Activated naive CD4-positive, alpha-beta T cell treated with anti-CD3 and anti-CD28 coated beads for 36 hours (primary cell): ENCODE measurements at regions of chr1 and their contacts with region 1.

Region 1: DNA sequence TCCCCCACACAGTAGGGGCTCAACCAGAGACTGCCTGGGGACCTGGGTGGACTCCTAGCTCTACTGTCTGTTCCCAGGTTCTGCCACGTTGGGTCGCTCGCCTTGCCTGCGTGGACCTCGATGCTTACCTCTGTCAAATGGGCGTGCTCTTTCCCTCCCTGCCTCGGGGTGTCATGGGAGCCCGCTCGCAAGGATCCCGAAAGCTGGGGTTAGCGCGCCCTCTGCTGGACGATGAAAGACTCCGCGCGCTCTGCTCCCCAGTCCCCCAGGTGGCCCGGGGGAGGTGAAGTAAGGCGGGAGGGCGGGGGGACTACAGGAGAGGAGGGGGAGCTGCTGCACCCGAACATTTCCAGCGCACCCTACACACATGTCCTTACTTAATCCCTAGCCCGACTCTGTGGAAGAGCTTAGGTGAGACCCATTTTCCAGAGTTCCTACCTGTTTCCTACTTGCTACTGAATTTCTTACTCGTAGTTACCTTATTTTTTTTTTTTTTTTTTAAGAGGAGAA is 2.3 kb upstream of the BSND start:
- DNase-seq: peak; percentile 89
- H3K4me3 Mint-ChIP-seq: no peak overlapping the region
- H3K27ac Mint-ChIP-seq: no peak overlapping the region
- H3K4me1 Mint-ChIP-seq: peaks cover 18% of the 10 kb centered on the region
- H3K27me3 Mint-ChIP-seq: peaks cover 40% of the 10 kb centered on the region

Region 2: GRCh38 chr1:54671985-54672608 is 324.3 kb before region 1 on chr1:
- CTCF ChIA-PET with region 1: no interaction called
- intact Hi-C with region 1: loop called (anchors 1 kb)
- DNase-seq: peak; percentile 84
- H3K4me3 Mint-ChIP-seq: no peak overlapping the region
- H3K27ac Mint-ChIP-seq: no peak overlapping the region
- H3K4me1 Mint-ChIP-seq: no peaks in the 10 kb centered on the region
- H3K27me3 Mint-ChIP-seq: no peaks in the 10 kb centered on the region

Region 3: GRCh38 chr1:54950369-54951163 is 45.8 kb before region 1 on chr1:
- CTCF ChIA-PET with region 1: interaction called, 72 read pairs
- intact Hi-C with region 1: loop called (anchors 1 kb)
- DNase-seq: peak; percentile 81
- H3K4me3 Mint-ChIP-seq: no peak overlapping the region
- H3K27ac Mint-ChIP-seq: no peak overlapping the region
- H3K4me1 Mint-ChIP-seq: no peaks in the 10 kb centered on the region
- H3K27me3 Mint-ChIP-seq: no peaks in the 10 kb centered on the region

Region 4: GRCh38 chr1:54956726-54957125 is 39.7 kb before region 1 on chr1:
- CTCF ChIA-PET with region 1: interaction called, 53 read pairs
- intact Hi-C with region 1: no loop called
- DNase-seq: no peak
- H3K4me3 Mint-ChIP-seq: no peak overlapping the region
- H3K27ac Mint-ChIP-seq: no peak overlapping the region
- H3K4me1 Mint-ChIP-seq: no peaks in the 10 kb centered on the region
- H3K27me3 Mint-ChIP-seq: peaks cover 6% of the 10 kb centered on the region

Region 5: GRCh38 chr1:55021965-55022546 is 25.6 kb after region 1 on chr1:
- CTCF ChIA-PET with region 1: interaction called, 5 read pairs
- intact Hi-C with region 1: loop called (anchors 2 kb)
- DNase-seq: peak; percentile 82
- H3K4me3 Mint-ChIP-seq: no peak overlapping the region
- H3K27ac Mint-ChIP-seq: no peak overlapping the region
- H3K4me1 Mint-ChIP-seq: no peaks in the 10 kb centered on the region
- H3K27me3 Mint-ChIP-seq: no peaks in the 10 kb centered on the region